Activated T-helper 1 cell treated with anti-CD3 and anti-CD28 coated beads, Interleukin-12 subunit alpha, Interleukin-12 subunit beta, Interleukin-2, Interleukin-4 antibody, amounts not matched to agents 30 ng/mL and 10 ng/mL and 1 ng/mL, durations not matched to agents 14 hours and 24 hours and 36 hours (primary cell): ENCODE measurements at regions of chr19 and their contacts with region 1.

Region 1: GRCh38 chr19:18063463-18063862 is 23.3 kb downstream of the IL12RB1 start:
- DNase-seq: no peak
- H3K4me3 Mint-ChIP-seq: no peak overlapping the region
- H3K27ac Mint-ChIP-seq: no peak overlapping the region
- H3K4me1 Mint-ChIP-seq: peaks cover 3% of the 10 kb centered on the region
- H3K27me3 Mint-ChIP-seq: no peaks in the 10 kb centered on the region

Region 2: DNA sequence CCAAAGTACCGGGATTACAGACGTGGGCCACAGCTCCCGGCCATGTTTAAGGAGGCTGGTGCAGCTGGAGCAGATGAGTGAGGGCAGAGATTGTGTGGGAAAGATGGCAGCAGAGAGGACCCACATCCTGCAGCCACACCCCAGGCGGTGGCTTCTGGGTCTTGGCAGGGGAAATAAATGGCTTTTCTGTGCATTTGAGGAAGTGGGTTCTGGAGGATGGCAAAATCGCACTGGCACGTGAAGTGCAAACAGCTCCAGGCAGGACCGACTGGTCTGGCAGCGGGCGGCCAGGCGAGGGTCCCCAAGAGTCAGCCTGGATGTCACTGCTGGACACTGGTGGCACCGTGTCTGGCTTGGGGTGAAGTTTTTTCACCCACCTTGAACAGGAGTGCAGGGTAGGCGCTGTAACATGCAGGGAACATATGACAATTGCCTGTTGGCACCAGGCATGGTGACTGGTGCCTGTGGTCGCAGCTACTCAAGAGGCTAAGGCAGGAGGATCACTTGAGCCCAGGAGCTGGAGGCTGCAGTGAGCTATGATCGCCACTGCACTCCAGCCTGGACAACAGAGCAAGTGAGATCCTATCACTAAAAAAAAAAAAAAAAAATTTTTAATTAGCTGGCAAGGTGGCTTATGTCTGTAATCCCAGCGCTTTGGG is 260.1 kb before region 1 on chr19:
- intact Hi-C with region 1: no loop called
- DNase-seq: peak; percentile 9
- H3K4me3 Mint-ChIP-seq: peak overlapping the region; percentile 19
- H3K27ac Mint-ChIP-seq: no peak overlapping the region
- H3K4me1 Mint-ChIP-seq: peaks cover 29% of the 10 kb centered on the region
- H3K27me3 Mint-ChIP-seq: peaks cover 6% of the 10 kb centered on the region

Region 3: GRCh38 chr19:18051887-18052286 is 11.6 kb before region 1 on chr19:
- intact Hi-C with region 1: no loop called
- DNase-seq: no peak
- H3K4me3 Mint-ChIP-seq: no peak overlapping the region
- H3K27ac Mint-ChIP-seq: no peak overlapping the region
- H3K4me1 Mint-ChIP-seq: peaks cover 29% of the 10 kb centered on the region
- H3K27me3 Mint-ChIP-seq: peaks cover 1% of the 10 kb centered on the region

Region 4: DNA sequence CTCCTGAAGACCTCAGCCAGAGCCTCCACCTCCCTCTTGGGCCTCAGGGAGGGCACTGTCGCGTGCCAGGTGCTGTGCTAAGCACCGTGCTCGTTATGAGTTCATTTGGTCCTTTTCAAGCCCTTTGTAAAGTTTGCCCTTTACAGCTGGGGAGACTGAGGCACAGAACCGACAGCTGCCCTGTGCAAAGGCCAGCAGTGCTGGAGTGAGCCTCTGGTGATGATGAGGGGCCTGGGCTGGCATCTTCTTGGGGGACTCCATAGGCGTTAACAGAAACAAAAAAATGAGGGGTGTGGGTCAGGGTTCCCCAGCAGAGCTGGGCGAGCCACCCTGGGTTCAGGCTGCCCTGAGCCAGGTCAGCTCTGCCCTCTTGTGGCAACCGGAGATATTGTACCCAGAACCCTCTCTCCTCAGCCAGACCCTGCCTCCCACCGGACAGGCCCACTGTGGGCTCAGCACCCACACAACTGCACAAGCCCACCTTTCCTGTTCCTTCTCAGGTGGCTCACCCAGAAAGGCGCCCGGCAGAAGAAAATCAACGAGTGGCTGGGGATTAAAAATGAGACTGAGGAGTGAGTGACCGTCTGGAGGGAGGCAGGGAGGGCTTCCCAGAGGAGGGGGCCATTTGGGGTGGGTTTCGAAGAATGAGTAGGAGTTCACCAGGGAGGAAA is 104.6 kb after region 1 on chr19:
- intact Hi-C with region 1: loop called (anchors 1 kb)
- DNase-seq: peak; percentile 54
- H3K4me3 Mint-ChIP-seq: no peak overlapping the region
- H3K27ac Mint-ChIP-seq: no peak overlapping the region
- H3K4me1 Mint-ChIP-seq: peaks cover 4% of the 10 kb centered on the region
- H3K27me3 Mint-ChIP-seq: peaks cover 3% of the 10 kb centered on the region